Activated CD4-positive, alpha-beta T cell treated with anti-CD3 and anti-CD28 coated beads for 36 hours (primary cell): ENCODE measurements at regions of chr10 and their contacts with region 1.

Region 1: DNA sequence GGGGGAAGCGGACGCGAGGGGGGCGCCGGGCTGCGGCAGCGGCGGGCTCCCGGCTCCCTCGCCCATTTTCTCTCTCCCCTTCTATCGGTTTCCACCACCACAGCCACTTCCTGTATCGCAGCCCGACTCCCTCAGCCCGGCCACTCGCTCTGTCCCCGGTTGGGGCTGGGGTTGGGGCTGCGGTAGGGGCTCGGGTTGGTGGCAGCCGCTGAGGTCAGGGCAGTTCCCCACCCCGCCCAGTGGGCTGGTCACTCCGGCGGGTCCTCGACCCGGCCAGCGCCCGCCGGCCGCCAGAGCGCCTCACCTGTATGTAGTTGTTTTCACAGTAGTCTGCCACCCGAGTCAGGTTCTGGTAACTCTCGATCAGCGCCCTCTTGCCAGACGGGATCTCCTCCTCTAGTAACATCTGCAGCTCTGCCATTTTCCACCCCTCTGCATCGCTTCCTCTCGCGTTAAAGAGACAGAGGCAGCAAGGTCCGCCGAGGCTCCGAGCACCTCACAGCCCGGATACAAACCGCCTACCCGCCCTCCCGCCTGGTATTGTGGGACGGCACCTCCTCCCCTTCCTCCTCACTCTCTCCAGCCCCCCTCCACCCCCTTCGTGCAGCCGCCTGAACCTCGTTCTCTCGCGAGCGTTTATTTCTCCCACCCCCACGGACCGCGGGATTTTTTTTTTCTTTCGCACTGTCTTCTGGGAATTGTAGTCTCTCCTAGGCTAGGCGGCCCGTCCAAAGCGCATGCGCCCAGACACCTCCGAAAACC is at the start of gene ABI1:
- DNase-seq: peak; percentile 99
- ATAC-seq: peak; percentile 95
- H3K4me3 Mint-ChIP-seq: peak within 1 kb of the TSS; percentile 98
- H3K27ac Mint-ChIP-seq: peak within 1 kb of the TSS; percentile 98
- H3K4me1 Mint-ChIP-seq: peaks cover 30% of the 10 kb centered on the region
- H3K27me3 Mint-ChIP-seq: no peaks in the 10 kb centered on the region
- total RNA-seq, gene ABI1: 44.2 to 56.6 TPM

Region 2: DNA sequence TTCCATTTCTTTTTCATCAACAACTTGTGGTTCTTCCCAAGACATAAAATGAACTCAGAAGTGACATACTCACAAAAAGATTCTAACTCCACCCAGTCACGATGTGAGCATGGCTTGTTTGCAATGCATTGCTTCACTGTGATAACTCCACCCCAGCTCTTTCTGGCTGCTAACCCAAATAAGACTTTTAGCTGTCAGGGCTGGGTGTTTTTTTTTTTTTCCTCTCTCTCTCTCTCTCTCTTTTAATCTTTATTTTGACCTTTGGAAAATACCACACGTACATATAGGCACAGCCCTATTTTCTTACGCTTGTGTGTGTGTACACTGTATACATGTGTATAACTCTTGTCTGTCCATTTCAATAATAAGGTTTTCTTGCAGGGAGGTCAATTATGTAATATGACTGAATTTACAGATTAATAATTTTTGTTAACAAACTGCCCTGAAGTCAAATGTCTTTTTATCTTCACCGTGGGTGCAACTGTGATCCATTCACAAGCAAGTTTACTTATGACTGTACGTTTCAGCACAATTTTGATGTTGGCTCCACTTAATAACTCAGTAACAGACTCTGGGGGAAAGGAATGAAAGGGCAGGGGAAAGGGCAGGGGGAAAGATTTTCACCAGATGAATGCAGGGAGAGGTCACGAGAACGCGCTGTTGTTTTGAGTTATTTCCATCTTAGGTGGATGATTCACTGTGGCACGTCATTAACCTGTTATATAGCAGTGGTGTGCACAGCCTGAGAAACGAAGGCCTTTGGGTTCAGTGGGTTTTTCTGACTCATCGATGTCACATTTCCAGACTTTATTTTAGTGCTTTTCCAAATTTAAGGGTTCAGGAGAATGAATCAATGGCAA is 373.4 kb before region 1 on chr10:
- CTCF ChIA-PET with region 1: no interaction called
- POLR2A ChIA-PET with region 1: no interaction called
- intact Hi-C with region 1: loop called in 1 of 2 experiments (anchors 2 kb)
- DNase-seq: peak; percentile 83
- ATAC-seq: peak; percentile 80
- H3K4me3 Mint-ChIP-seq: peak overlapping the region; percentile 61
- H3K27ac Mint-ChIP-seq: peak overlapping the region; percentile 97
- H3K4me1 Mint-ChIP-seq: peaks cover 72% of the 10 kb centered on the region
- H3K27me3 Mint-ChIP-seq: no peaks in the 10 kb centered on the region

Region 3: GRCh38 chr10:26725837-26726727 is 134.5 kb before region 1 on chr10:
- CTCF ChIA-PET with region 1: interaction called, 18 read pairs
- POLR2A ChIA-PET with region 1: no interaction called
- intact Hi-C with region 1: no loop called
- DNase-seq: peak; percentile 71
- ATAC-seq: peak; percentile 56
- H3K4me3 Mint-ChIP-seq: no peak overlapping the region
- H3K27ac Mint-ChIP-seq: no peak overlapping the region
- H3K4me1 Mint-ChIP-seq: peaks cover 4% of the 10 kb centered on the region
- H3K27me3 Mint-ChIP-seq: no peaks in the 10 kb centered on the region

Region 4: GRCh38 chr10:26780793-26781601 is 79.6 kb before region 1 on chr10:
- CTCF ChIA-PET with region 1: interaction called, 3 read pairs
- POLR2A ChIA-PET with region 1: interaction called, 7 read pairs
- intact Hi-C with region 1: loop called in 1 of 2 experiments (anchors 1 kb)
- DNase-seq: peak; percentile 63
- ATAC-seq: peak; percentile 81
- H3K4me3 Mint-ChIP-seq: peak overlapping the region; percentile 23
- H3K27ac Mint-ChIP-seq: peak overlapping the region; percentile 92
- H3K4me1 Mint-ChIP-seq: peaks cover 82% of the 10 kb centered on the region
- H3K27me3 Mint-ChIP-seq: no peaks in the 10 kb centered on the region

Region 5: DNA sequence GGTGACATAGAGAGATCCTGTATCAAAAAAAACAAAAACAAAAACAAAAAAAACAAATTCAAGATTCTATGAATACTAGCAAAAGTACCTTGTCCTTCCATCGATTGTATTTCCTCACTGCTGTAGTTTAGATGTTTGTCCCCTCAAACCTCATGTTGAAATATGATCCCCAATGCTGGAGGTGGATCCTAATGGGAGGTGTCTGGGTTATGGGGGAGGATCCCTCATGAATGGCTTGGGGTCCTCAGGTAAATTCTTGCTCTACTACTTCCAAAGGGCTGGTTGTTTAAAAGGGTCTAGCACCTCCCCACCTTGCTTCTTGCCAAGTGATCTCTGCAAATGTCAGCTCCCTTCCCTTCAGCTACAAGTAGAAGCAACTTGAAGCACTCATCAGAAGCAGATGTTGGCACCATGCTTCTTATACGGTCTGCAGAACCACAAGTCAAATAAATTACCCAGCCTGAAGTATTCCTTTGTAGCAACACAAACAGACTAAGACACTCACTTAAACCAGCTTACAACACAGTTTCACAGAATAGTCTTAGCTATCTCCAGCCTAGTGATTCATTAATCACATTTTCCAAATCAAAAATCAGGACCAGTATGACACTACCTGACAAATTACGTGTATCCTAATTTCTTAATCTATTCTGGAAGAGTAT is 20.5 kb before region 1 on chr10:
- CTCF ChIA-PET with region 1: interaction called, 3 read pairs
- POLR2A ChIA-PET with region 1: interaction called, 8 read pairs
- intact Hi-C with region 1: loop called (anchors 2 kb)
- DNase-seq: no peak
- ATAC-seq: peak; percentile 69
- H3K4me3 Mint-ChIP-seq: no peak overlapping the region
- H3K27ac Mint-ChIP-seq: peak overlapping the region; percentile 8
- H3K4me1 Mint-ChIP-seq: peaks cover 63% of the 10 kb centered on the region
- H3K27me3 Mint-ChIP-seq: no peaks in the 10 kb centered on the region

Region 6: GRCh38 chr10:27099916-27100812 is 239.5 kb after region 1 on chr10 and contains the start of gene ANKRD26:
- CTCF ChIA-PET with region 1: no interaction called
- POLR2A ChIA-PET with region 1: no interaction called
- intact Hi-C with region 1: loop called in 1 of 2 experiments (anchors 1 kb)
- DNase-seq: peak; percentile 97
- ATAC-seq: peak; percentile 66
- H3K4me3 Mint-ChIP-seq: peak within 1 kb of the TSS; percentile 84
- H3K27ac Mint-ChIP-seq: peak within 1 kb of the TSS; percentile 93
- H3K4me1 Mint-ChIP-seq: peaks cover 49% of the 10 kb centered on the region
- H3K27me3 Mint-ChIP-seq: no peaks in the 10 kb centered on the region
- total RNA-seq, gene ANKRD26: 10.2 to 13.2 TPM

Region 7: DNA sequence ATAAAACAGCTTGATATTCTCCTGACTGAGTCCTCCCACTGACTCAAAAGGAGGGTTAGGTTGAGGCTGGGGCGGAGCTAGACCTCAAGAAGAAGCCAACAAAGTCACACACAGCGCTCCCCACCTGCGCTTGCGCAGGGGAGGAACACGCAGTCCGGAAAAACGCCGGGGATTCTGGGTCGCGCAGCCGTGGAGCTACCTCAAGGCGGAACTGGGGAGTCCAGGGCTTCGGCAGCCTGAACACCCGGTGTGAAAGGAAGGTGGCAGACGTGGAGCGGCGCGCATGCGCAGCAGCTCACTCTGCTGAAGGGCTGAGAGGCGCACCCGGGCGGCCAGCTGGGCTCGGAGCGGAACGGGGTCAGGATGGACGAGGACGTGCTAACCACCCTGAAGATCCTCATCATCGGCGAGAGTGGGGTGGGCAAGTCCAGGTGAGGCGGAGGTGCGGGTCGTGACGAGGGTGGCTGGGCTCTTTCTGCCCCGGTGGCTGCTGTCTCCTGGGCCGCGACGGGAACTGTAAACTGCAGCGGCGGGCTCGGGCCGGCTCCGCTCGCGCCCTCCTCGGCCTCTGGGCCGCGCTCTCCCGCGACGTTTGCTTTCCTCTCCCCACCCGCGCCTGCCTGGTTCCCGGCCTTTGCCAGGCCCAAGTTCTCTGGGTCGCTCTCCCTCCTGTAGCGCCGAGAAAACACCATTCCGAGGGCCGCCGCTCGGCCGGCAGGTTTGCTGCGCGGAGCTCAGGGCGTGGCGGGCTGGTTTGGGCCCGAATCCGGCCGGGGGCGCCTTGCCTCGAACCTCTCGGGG is 643.6 kb after region 1 on chr10 and contains the start of gene RAB18:
- CTCF ChIA-PET with region 1: no interaction called
- POLR2A ChIA-PET with region 1: no interaction called
- intact Hi-C with region 1: loop called in 1 of 2 experiments (anchors 1 kb)
- DNase-seq: peak; percentile 99
- ATAC-seq: peak; percentile 98
- H3K4me3 Mint-ChIP-seq: peak within 1 kb of the TSS; percentile 93
- H3K27ac Mint-ChIP-seq: peak within 1 kb of the TSS; percentile 93
- H3K4me1 Mint-ChIP-seq: peaks cover 46% of the 10 kb centered on the region
- H3K27me3 Mint-ChIP-seq: no peaks in the 10 kb centered on the region
- total RNA-seq, gene RAB18: 44.6 to 49.3 TPM